Activated CD4-positive, alpha-beta T cell treated with anti-CD3 and anti-CD28 coated beads, Interleukin-2, amount 10 ng/mL, durations not matched to agents 24 days and 14 days (primary cell): ENCODE measurements at regions of chr6 and their contacts with region 1.

Region 1: DNA sequence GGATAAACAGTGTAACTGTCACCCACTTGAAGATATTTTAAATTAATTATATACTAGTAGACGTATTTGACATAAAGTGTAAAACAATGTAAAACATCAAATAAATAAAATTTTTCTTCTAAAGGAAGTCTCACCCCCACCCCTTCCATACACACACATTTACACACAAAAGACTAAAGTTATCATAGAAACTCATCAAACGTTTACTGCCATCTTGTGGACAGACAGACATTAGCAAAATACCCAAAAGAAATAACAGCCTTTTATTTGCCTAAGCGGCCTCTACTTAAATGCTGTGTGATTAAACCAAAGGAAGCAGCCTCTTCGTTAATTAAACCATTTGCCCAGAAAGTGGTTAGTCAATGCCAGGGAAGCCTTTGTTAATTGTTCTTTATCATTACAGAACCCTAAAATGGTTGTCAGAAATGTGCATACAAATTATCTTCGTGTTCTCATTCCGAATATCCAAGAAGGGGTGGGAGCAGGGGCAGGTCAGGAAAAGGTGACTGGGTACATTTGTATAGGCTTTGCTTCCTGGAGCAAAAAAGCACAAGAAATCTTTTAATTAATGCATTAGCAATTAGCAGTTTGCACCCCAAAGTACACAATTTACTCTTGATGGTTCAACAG is 176.2 kb upstream of the SASH1 start:
- DNase-seq: no peak
- H3K4me3 Mint-ChIP-seq: no peak overlapping the region
- H3K27ac Mint-ChIP-seq: no peak overlapping the region
- H3K4me1 Mint-ChIP-seq: no peaks in the 10 kb centered on the region
- H3K27me3 Mint-ChIP-seq: no peaks in the 10 kb centered on the region

Region 2: GRCh38 chr6:147506704-147507114 is 659.7 kb before region 1 on chr6:
- intact Hi-C with region 1: loop called (anchors 2 kb)
- DNase-seq: peak; percentile 79
- H3K4me3 Mint-ChIP-seq: peak overlapping the region; percentile 76
- H3K27ac Mint-ChIP-seq: no peak overlapping the region
- H3K4me1 Mint-ChIP-seq: peaks cover 11% of the 10 kb centered on the region
- H3K27me3 Mint-ChIP-seq: peaks cover 49% of the 10 kb centered on the region

Region 3: DNA sequence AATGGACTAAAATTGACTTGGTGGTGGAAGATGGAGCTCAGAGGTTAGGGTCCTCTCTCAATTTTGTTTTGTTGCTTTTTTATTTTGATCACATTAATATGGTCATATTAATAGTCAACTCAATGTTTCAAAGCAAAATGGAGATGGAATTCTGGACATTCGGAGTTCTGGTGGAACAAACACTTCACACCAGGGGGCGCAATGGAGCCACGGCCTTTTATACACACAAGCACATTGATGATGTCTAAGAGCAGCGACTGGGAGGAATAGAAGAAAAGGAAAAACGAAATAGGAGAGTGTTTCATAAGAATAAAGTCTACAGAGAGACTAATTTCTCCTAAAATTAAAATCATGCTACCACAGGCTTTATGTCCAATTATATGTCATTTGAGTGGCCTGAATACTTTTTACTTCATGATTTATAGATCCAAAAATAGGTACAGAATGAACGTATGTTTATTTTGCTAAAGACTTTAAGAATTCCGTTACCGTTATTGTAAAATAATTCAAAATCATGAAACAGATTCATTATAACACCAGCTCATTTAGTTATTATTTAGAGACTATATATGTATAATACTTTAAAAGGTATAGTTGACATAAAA is 21.4 kb before region 1 on chr6:
- intact Hi-C with region 1: loop called (anchors 2 kb)
- DNase-seq: peak; percentile 83
- H3K4me3 Mint-ChIP-seq: no peak overlapping the region
- H3K27ac Mint-ChIP-seq: no peak overlapping the region
- H3K4me1 Mint-ChIP-seq: peaks cover 8% of the 10 kb centered on the region
- H3K27me3 Mint-ChIP-seq: peaks cover 3% of the 10 kb centered on the region

Region 4: DNA sequence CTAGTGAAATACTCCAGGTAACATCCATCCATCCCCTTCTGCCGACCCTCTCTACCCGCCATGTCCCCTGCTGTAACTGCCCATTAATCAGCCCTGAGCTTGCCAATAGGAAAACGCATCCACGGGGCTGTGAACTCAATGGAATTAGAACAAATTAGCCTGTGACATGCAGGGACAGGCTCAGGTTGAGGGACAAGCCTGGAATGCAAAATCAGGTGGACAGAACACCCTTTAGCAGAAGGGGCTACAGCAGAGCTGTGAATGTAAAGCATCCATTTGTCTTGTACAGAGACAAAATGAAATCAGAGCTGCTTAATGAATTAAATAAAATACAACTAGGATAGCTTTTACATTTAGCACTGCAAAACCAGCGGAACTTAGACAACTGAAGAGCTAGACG is 11.2 kb before region 1 on chr6:
- intact Hi-C with region 1: no loop called
- DNase-seq: no peak
- H3K4me3 Mint-ChIP-seq: no peak overlapping the region
- H3K27ac Mint-ChIP-seq: no peak overlapping the region
- H3K4me1 Mint-ChIP-seq: no peaks in the 10 kb centered on the region
- H3K27me3 Mint-ChIP-seq: peaks cover 2% of the 10 kb centered on the region

Region 5: GRCh38 chr6:148342357-148343046 is 176.0 kb after region 1 on chr6 and contains the start of gene SASH1:
- intact Hi-C with region 1: no loop called
- DNase-seq: peak; percentile 72
- H3K4me3 Mint-ChIP-seq: peak within 1 kb of the TSS; percentile 83
- H3K27ac Mint-ChIP-seq: peak within 1 kb of the TSS; percentile 16
- H3K4me1 Mint-ChIP-seq: peaks cover 12% of the 10 kb centered on the region
- H3K27me3 Mint-ChIP-seq: peaks cover 48% of the 10 kb centered on the region
- total RNA-seq, gene SASH1: 0.44 and 0.66 TPM in 2 replicates